Aorta (tissue), 5 donors: ENCODE measurements at regions of chr17 and their contacts with region 1.

Region 1: GRCh38 chr17:50631908-50632571 is 2.6 kb upstream of the ABCC3 start:
- DNase-seq: peak in 1 of 2 donors; percentile 20
- ATAC-seq: no peak
- H3K4me3 ChIP-seq: no peak overlapping the region
- H3K27ac ChIP-seq: no peak overlapping the region
- H3K4me1 ChIP-seq: no peaks in the 10 kb centered on the region
- H3K27me3 ChIP-seq: no peaks in the 10 kb centered on the region

Region 2: GRCh38 chr17:50604513-50604912 is 27.5 kb before region 1 on chr17:
- intact Hi-C with region 1: no loop called
- DNase-seq: peak; percentile 81 to 83
- ATAC-seq: peak; percentile 74
- H3K4me3 ChIP-seq: no peak overlapping the region
- H3K27ac ChIP-seq: no peak overlapping the region
- H3K4me1 ChIP-seq: no peaks in the 10 kb centered on the region
- H3K27me3 ChIP-seq: no peaks in the 10 kb centered on the region

Region 3: DNA sequence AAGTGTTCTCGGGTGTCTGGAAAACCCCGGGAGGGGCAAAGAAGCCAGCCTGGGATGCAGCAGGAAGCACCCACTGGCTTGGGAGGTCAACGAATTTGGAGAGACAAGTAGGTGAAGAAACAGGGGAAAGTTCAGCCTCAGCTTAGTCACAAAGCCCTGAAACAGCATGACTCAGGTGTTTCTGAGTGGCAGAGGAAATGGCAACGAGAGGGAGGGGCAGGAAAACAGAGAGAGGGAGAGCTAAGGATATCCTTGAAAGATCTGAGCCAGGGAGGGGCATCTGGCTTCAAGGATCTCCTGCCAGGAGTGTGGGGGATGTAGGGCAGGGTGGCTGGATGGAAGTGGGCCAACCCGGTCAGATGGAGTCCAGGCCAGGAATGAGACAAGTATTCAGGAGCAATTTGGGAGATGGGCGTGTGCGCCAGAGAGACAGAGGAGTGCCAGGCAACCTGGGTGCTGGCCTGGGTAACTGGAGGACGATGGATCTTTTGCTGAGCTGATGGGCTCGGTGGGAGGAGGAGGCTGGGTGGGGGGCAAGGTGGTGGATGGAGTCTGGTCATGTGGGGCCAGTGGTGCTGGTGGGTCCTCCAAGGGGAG is 29.9 kb after region 1 on chr17:
- intact Hi-C with region 1: loop called (anchors 2 to 5 kb)
- DNase-seq: peak; percentile 84 to 85
- ATAC-seq: peak; percentile 61
- H3K4me3 ChIP-seq: no peak overlapping the region
- H3K27ac ChIP-seq: no peak overlapping the region
- H3K4me1 ChIP-seq: no peaks in the 10 kb centered on the region
- H3K27me3 ChIP-seq: no peaks in the 10 kb centered on the region

Region 4: GRCh38 chr17:50719144-50719923 is 87.3 kb after region 1 on chr17 and contains the start of gene LUC7L3:
- intact Hi-C with region 1: no loop called
- DNase-seq: peak; percentile 96 to 98
- ATAC-seq: peak; percentile 99
- H3K4me3 ChIP-seq: peak within 1 kb of the TSS; percentile 83 to 99
- H3K27ac ChIP-seq: peak within 1 kb of the TSS; percentile 76 to 92
- H3K4me1 ChIP-seq: peaks cover 0 to 2% of the 10 kb centered on the region in 2 donors
- H3K27me3 ChIP-seq: no peaks in the 10 kb centered on the region
- total RNA-seq, gene LUC7L3: 123 to 189 TPM